ENCODE measurements at regions of chr7 and their contacts with region 1.

Region 1: DNA sequence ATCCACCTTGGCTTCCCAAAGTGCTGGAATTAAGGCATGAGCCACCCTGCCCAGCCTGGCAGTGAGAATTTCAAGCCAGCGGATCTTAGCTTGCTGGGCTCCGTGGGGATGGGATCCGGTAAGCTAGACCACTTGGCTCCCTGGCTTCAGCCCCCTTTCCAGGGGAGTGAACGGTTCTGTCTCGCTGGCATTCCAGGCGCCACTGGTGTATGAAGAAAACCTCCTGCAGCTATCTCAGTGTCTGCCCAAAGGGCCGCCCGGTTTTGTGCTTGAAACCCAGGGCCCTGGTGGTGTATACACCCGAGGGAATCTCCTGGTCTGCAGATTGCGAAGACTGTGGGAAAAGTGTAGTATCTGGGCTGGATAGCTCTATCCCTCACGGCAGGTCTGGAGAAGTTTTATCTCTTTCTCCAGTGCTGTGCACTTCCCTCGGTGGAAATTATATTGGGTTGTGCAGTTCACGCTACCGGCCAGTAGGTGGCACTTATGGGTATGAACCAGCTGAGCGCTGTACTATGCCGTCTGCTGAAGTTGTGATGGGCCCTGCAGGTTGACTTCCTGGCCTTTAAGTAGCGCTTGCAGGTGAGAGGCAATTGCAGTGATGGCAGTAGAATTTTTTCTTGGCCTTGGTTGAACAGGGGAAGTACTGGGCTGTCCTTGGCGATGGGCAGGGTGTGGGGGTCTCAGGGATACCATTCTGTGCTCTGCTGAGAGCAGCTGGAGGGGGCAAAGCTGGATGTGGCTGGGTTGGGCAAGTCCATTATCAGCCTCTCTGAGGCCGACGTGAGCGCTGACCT is 138.0 kb upstream of the MTPN start:
- DNase-seq: peak; percentile 77 to 90 (median 82)
- ATAC-seq: peak; percentile 99
- H3K4me3 ChIP-seq: no peak overlapping the region
- H3K27ac ChIP-seq: no peak overlapping the region
- H3K4me1 ChIP-seq: peaks cover 0 to 25% of the 10 kb centered on the region in 2 experiments; a peak in 3 of 5 replicates
- H3K27me3 ChIP-seq: no peaks in the 10 kb centered on the region
- CTCF ChIP-seq: peak; percentile 89 to 95 (median 93)
- EP300 ChIP-seq: peak; percentile 47
- POLR2A ChIP-seq: no peak
- RAD21 ChIP-seq: peak; percentile 71 to 83

Region 2: GRCh38 chr7:136104269-136104603 is 10.9 kb before region 1 on chr7:
- CTCF ChIA-PET with region 1: interaction called, 4 read pairs
- POLR2A ChIA-PET with region 1: interaction called, 18 read pairs
- in situ Hi-C with region 1: no loop called
- intact Hi-C with region 1: no loop called
- DNase-seq: peak in 2 of 4 experiments; percentile 42 to 68
- ATAC-seq: peak; percentile 85
- H3K4me3 ChIP-seq: no peak overlapping the region
- H3K27ac ChIP-seq: peak overlapping the region; percentile 55; the same call in 1 of the 3 replicates
- H3K4me1 ChIP-seq: peaks cover 5 to 6% of the 10 kb centered on the region in 2 experiments; a peak in 3 of 5 replicates
- H3K27me3 ChIP-seq: no peaks in the 10 kb centered on the region
- CTCF ChIP-seq: peak in 2 of 3 experiments; percentile 25 to 27; a peak in 3 of 6 replicates
- EP300 ChIP-seq: no peak
- POLR2A ChIP-seq: no peak
- RAD21 ChIP-seq: peak; percentile 31 to 42

Region 3: GRCh38 chr7:136163340-136163801 is 48.2 kb after region 1 on chr7:
- CTCF ChIA-PET with region 1: no interaction called
- POLR2A ChIA-PET with region 1: no interaction called
- in situ Hi-C with region 1: no loop called
- intact Hi-C with region 1: no loop called
- DNase-seq: no peak
- ATAC-seq: peak; percentile 58
- H3K4me3 ChIP-seq: no peak overlapping the region
- H3K27ac ChIP-seq: no peak overlapping the region
- H3K4me1 ChIP-seq: no peaks in the 10 kb centered on the region
- H3K27me3 ChIP-seq: no peaks in the 10 kb centered on the region
- CTCF ChIP-seq: no peak
- EP300 ChIP-seq: no peak
- POLR2A ChIP-seq: no peak
- RAD21 ChIP-seq: no peak

Region 4: GRCh38 chr7:136687693-136688322 is 572.6 kb after region 1 on chr7:
- CTCF ChIA-PET with region 1: interaction called, 4 read pairs
- POLR2A ChIA-PET with region 1: no interaction called
- in situ Hi-C with region 1: no loop called
- intact Hi-C with region 1: loop called (anchors 5 kb)
- DNase-seq: peak; percentile 24 to 53 (median 50)
- ATAC-seq: peak; percentile 67
- H3K4me3 ChIP-seq: no peak overlapping the region
- H3K27ac ChIP-seq: no peak overlapping the region
- H3K4me1 ChIP-seq: no peaks in the 10 kb centered on the region
- H3K27me3 ChIP-seq: no peaks in the 10 kb centered on the region
- CTCF ChIP-seq: peak; percentile 46 to 75 (median 60); a peak in 5 of 6 replicates
- EP300 ChIP-seq: no peak
- POLR2A ChIP-seq: no peak
- RAD21 ChIP-seq: peak; percentile 51 to 62

Region 5: GRCh38 chr7:137592232-137592896 is 1477.2 kb after region 1 on chr7:
- CTCF ChIA-PET with region 1: no interaction called
- POLR2A ChIA-PET with region 1: no interaction called
- in situ Hi-C with region 1: no loop called
- intact Hi-C with region 1: loop called (anchors 10 kb)
- DNase-seq: peak; percentile 48 to 76 (median 64)
- ATAC-seq: peak; percentile 94
- H3K4me3 ChIP-seq: no peak overlapping the region
- H3K27ac ChIP-seq: no peak overlapping the region
- H3K4me1 ChIP-seq: peaks cover 0 to 10% of the 10 kb centered on the region in 2 experiments; a peak in 3 of 5 replicates
- H3K27me3 ChIP-seq: no peaks in the 10 kb centered on the region
- CTCF ChIP-seq: peak; percentile 86 to 92 (median 92)
- EP300 ChIP-seq: no peak
- POLR2A ChIP-seq: no peak
- RAD21 ChIP-seq: peak; percentile 93